ENCODE measurements at regions of chr1 and their contacts with region 1.

Region 1: DNA sequence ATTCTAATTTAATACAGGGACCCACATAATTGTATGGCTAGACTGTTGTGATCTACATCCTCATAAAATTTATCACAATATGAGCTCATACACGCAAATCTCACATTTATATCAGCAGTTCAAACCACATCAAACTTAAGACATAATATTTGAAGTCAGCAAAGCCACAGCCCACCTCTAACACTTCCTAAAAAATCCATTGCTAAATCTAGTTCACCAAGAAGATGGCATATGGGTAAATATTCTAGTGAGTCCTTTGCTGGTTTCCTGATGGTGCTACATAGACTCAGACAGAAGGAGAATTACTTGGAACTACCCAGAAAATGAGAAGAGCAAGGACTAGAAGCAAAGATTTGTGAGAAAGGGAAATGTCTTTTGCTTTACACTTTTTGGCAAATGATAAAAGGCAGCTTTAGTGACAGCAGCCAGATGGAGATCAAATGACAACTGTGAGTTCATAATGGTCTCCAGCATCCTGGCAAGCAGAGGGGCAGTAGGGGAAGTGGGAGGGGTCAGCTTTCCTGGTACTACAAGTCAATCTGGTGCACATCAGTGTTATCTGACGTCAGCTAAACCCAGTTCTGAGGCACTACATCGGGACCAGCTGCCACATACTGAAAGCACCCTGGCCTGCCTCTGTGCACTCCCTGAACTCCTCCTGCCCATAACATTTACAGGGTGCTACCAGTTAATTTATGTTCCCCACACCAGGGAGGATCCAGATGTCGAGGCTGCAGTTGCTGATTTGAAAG is 10.6 kb upstream of the GADD45A start:
- DNase-seq: peak; percentile 96
- H3K4me3 ChIP-seq: no peak overlapping the region
- H3K27ac ChIP-seq: peak overlapping the region; percentile 69
- H3K4me1 ChIP-seq: peaks cover 18% of the 10 kb centered on the region
- H3K27me3 ChIP-seq: no peaks in the 10 kb centered on the region
- CTCF ChIP-seq: no peak
- POLR2A ChIP-seq: no peak

Region 2: GRCh38 chr1:67590329-67590728 is 84.1 kb before region 1 on chr1:
- CTCF ChIA-PET with region 1: no interaction called
- POLR2A ChIA-PET with region 1: no interaction called
- dilution Hi-C with region 1: no loop called
- intact Hi-C with region 1: loop called (anchors 1 kb)
- DNase-seq: peak; percentile 97
- H3K4me3 ChIP-seq: no peak overlapping the region
- H3K27ac ChIP-seq: peak overlapping the region; percentile 38
- H3K4me1 ChIP-seq: peaks cover 3% of the 10 kb centered on the region
- H3K27me3 ChIP-seq: no peaks in the 10 kb centered on the region
- CTCF ChIP-seq: no peak
- POLR2A ChIP-seq: no peak

Region 3: GRCh38 chr1:67713057-67713846 is 38.8 kb after region 1 on chr1:
- CTCF ChIA-PET with region 1: no interaction called
- POLR2A ChIA-PET with region 1: no interaction called
- dilution Hi-C with region 1: no loop called
- intact Hi-C with region 1: no loop called
- DNase-seq: peak; percentile 92
- H3K4me3 ChIP-seq: no peak overlapping the region
- H3K27ac ChIP-seq: peak overlapping the region; percentile 64
- H3K4me1 ChIP-seq: peaks cover 45% of the 10 kb centered on the region
- H3K27me3 ChIP-seq: no peaks in the 10 kb centered on the region
- CTCF ChIP-seq: no peak
- POLR2A ChIP-seq: no peak

Measured in endothelial cell of umbilical vein (primary cell).